Cardiac septum (tissue), 1 donor: ENCODE measurements at regions of chrX and their contacts with region 1.

Region 1: DNA sequence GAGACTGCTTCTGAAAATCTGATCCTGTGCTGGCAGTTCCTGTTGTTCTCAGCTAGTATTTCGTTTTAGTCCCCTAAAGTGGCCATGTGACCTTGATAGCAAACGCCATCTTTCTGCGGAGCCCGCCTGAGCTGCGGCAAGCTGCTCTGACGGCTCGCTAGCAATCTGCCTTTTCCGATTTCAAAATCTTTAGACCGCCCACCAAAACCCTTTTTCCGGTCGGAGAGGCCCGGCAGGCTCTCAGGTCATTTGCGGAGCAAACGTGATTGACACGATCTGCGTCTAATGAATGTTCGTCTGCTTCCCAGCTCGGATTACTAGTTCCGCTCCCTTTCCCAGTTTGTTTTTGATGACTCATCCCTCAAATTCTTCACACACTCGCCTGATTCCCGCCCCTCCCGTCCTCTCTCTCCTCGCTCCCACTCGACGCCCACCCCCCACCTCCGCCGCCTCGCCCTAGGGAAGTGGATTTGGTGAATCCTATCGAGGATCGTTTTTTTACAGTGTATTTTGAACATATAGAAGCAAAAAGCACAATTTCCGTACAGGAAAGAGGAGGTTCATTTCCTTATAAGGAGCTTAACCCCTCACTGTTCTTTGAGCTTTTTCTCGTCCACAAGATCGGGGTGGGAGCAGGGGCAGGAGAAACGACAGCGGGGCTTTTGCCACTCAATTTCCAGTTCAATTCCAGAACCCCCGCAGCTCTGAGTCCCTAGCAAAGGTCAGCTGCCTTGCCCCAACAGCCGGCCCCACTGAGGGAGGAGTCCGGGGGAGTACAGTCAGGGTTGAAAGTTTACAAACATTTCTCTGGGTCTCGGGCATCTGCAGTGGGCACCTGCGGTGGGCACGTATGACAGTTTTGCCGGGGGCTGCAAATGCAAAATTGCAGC is 37.5 kb downstream of the NLGN3 start:
- DNase-seq: peak; percentile 90

Region 2: DNA sequence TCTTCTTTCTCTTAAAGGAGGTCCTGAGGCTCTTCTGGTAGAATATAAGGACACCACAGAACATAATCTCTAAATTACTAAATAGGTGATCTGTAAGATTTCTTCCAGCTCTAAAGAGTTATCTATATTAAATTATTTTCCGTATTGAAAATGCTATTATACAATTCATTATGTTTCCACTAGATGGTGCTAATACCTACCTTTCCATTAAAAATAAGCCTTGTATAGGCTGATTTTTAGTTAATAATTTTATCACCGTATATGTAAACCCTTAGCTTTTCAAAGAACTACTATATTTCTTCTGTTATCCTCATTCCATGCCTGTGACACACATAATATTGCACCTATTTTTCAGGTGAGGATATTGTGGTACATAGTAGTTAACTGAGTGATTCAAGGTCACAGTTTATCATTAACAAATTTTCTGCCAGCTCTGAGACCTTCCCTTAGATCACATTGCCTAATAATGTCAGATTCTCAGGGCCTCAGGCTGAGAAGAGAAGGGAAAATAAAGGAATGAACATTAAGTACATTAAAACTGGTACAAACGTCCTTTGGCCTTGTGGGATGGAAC is 412.4 kb before region 1 on chrX:
- intact Hi-C with region 1: loop called (anchors 5 kb)
- DNase-seq: no peak

Region 3: GRCh38 chrX:70970482-70970995 is 211.6 kb before region 1 on chrX:
- intact Hi-C with region 1: loop called (anchors 5 kb)
- DNase-seq: no peak

Region 4: DNA sequence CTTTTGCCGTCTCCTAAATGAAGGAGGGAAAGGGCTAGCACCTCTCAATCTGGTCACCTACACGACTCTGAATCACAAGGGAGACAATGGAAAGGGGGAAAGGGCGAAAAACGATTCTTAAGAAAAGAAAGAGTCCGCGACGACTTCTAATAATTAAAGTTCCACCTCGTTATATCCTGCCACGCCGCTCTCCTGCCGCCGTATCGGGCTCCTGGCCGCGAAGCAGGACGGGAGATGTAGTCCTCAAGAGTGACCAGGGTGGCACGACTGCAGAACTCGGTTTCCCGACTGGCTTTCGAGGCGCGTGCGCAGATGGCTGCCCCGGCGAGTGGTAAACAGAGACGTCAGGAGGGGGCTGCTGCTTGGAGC is 86.6 kb before region 1 on chrX and contains the start of gene FOXO4:
- intact Hi-C with region 1: loop called (anchors 2 kb)
- DNase-seq: peak; percentile 95
- total RNA-seq, gene FOXO4: 37.4 TPM

Region 5: DNA sequence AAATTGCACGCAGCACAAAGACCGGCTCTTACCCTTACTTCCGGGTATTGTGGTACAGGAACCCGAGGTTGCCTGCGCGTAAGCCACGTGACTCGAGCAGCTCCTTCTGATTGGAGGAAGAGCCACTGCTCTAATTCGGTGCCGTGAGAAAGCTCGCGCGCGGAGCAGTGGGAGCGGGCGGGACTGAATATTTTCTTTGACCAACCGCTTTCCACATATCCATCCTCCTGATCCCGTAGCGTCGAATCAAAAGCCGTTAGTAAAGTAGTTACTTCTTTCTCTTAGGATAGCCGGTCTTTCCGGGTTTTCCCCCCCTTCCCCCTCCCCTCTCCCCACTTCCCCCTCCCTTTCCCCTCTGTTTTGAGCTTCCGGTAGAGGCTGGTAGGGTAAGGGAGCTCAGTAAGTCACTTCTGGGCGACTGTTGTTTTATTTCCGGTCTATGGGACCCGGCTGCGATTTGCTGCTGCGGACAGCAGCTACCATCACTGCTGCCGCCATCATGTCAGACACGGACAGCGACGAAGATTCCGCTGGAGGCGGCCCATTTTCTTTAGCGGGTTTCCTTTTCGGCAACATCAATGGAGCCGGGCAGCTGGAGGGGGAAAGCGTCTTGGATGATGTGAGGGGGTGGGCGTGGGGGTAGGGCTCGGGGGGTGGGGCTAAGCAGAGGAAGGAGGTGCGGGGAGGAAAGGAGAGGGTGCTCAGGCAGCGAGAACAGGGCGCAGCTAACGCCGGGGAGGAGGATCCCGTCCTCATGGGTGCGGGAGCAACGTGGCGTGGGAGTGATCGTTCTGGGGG is 183.9 kb after region 1 on chrX and contains the start of gene TAF1:
- intact Hi-C with region 1: loop called (anchors 10 kb)
- DNase-seq: peak; percentile 96
- total RNA-seq, gene TAF1: 25.7 TPM